Activated T-helper 1 cell treated with anti-CD3 and anti-CD28 coated beads, Interleukin-12 subunit alpha, Interleukin-12 subunit beta, Interleukin-2, Interleukin-4 antibody, amounts not matched to agents 30 ng/mL and 10 ng/mL and 1 ng/mL, durations not matched to agents 14 hours and 24 hours and 36 hours (primary cell): ENCODE measurements at regions of chr11 and their contacts with region 1.

Region 1: GRCh38 chr11:34302046-34302921 is 55.5 kb downstream of the ABTB2 start:
- DNase-seq: no peak
- H3K4me3 Mint-ChIP-seq: no peak overlapping the region
- H3K27ac Mint-ChIP-seq: no peak overlapping the region
- H3K4me1 Mint-ChIP-seq: peaks cover 25% of the 10 kb centered on the region
- H3K27me3 Mint-ChIP-seq: no peaks in the 10 kb centered on the region

Region 2: GRCh38 chr11:33083918-33084317 is 1218.4 kb before region 1 on chr11:
- intact Hi-C with region 1: no loop called
- DNase-seq: no peak
- H3K4me3 Mint-ChIP-seq: no peak overlapping the region
- H3K27ac Mint-ChIP-seq: no peak overlapping the region
- H3K4me1 Mint-ChIP-seq: no peaks in the 10 kb centered on the region
- H3K27me3 Mint-ChIP-seq: no peaks in the 10 kb centered on the region

Region 3: DNA sequence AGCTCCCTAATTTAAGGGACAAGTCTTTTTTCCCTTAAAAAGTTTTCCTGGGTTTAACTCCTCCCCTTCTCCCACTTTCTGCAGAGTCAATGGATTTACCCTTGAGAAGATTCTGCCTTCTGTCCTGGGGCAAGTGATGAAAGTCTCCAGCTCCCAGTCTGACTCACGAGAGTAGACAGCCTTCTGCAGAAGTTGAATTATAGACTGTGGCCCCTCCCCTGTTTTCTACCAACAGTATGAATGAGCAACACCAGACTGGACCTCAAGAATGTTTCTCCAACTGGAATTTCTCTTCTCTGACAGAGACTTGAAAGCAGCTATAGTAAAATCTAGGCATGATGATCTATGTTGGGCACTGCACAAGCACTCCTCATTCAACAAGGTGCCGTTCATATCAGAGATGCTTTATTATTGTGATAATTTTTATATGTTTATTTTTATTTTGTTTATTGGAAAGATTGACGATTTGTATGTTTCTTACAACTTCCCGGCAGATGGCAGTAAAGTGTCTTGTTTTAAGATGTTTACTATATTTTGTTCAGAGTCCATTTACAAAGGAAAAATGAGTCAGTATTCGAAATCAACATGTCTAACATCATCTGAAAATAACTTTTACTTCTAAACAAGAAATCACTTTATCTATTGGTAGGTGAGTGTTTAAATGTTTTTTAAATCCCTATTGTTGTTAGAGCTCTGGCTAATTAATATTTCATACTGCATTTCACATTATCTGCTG is 467.0 kb before region 1 on chr11:
- intact Hi-C with region 1: no loop called
- DNase-seq: no peak
- H3K4me3 Mint-ChIP-seq: no peak overlapping the region
- H3K27ac Mint-ChIP-seq: no peak overlapping the region
- H3K4me1 Mint-ChIP-seq: no peaks in the 10 kb centered on the region
- H3K27me3 Mint-ChIP-seq: peaks cover 31% of the 10 kb centered on the region

Region 4: GRCh38 chr11:34250732-34251639 is 51.3 kb before region 1 on chr11:
- intact Hi-C with region 1: loop called (anchors 2 kb)
- DNase-seq: peak; percentile 38
- H3K4me3 Mint-ChIP-seq: peak overlapping the region; percentile 52
- H3K27ac Mint-ChIP-seq: peak overlapping the region; percentile 6
- H3K4me1 Mint-ChIP-seq: peaks cover 63% of the 10 kb centered on the region
- H3K27me3 Mint-ChIP-seq: peaks cover 13% of the 10 kb centered on the region